ENCODE measurements at regions of chr12 and their contacts with region 1.

Region 1: DNA sequence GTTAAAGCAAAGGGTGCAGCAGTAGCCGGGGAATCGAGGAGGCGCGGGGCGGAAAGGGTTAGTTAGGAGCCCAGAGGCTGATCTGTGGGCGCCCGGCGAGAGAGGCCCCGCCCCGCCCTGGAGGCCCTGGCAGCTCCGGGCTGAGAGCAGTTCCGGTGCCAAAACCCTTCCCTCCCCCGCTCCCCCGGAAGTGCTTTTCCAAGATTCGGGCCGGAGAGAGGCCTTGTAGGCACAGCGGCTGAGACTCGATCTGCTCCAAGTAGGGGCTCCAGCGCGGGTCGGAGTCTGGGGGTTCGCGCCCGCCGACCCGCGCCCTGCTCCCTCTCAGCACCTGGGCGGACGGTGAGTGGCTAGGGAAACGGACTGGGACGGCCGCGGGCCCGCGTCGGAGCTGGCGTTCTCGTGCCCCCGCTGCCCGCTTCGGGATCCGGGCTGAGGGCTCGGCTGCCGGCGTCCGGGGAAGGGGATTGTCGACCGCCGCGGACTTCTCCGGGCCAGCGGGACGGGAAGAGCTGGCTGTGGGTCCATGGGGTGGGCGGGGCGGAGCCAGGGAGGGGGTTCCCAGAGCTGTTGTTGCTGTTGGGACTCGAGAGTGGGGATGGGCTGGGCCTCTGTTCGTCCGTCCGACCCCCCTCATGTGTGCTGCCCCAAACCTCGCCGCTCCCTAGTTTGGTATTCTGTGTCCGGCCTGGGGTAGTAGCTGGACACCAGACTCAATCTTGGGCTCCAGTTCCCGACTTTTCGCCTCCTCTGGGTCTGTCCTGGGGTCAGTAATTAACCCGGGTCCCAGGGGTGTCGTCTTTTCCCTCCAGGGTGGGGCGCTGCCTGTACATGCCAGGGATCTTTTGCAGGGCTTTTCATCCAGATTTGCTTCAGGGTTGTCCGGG is at the start of gene FRS2:
- DNase-seq: peak; percentile 88 to 93 (median 92)
- ATAC-seq: peak; percentile 98
- H3K4me3 ChIP-seq: peak within 1 kb of the TSS; percentile 99
- H3K27ac ChIP-seq: peak within 1 kb of the TSS; percentile 88
- H3K4me1 ChIP-seq: peaks cover 6 to 12% of the 10 kb centered on the region in 2 experiments; a peak in 4 of 5 replicates
- H3K27me3 ChIP-seq: no peaks in the 10 kb centered on the region
- CTCF ChIP-seq: peak; percentile 59 to 63 (median 60)
- EP300 ChIP-seq: peak; percentile 8; the same call in 1 of the 2 replicates
- POLR2A ChIP-seq: peak; percentile 91
- RAD21 ChIP-seq: peak in 1 of 2 experiments; percentile 66; a peak in 3 of 4 replicates
- polyA plus RNA-seq, gene FRS2: 1.0 to 1.5 TPM

Region 2: GRCh38 chr12:69231479-69231878 is 239.0 kb before region 1 on chr12:
- CTCF ChIA-PET with region 1: no interaction called
- POLR2A ChIA-PET with region 1: no interaction called
- in situ Hi-C with region 1: no loop called
- intact Hi-C with region 1: no loop called
- DNase-seq: no peak
- ATAC-seq: no peak
- H3K4me3 ChIP-seq: no peak overlapping the region
- H3K27ac ChIP-seq: no peak overlapping the region
- H3K4me1 ChIP-seq: no peaks in the 10 kb centered on the region
- H3K27me3 ChIP-seq: no peaks in the 10 kb centered on the region
- CTCF ChIP-seq: no peak
- EP300 ChIP-seq: no peak
- POLR2A ChIP-seq: no peak
- RAD21 ChIP-seq: no peak

Region 3: DNA sequence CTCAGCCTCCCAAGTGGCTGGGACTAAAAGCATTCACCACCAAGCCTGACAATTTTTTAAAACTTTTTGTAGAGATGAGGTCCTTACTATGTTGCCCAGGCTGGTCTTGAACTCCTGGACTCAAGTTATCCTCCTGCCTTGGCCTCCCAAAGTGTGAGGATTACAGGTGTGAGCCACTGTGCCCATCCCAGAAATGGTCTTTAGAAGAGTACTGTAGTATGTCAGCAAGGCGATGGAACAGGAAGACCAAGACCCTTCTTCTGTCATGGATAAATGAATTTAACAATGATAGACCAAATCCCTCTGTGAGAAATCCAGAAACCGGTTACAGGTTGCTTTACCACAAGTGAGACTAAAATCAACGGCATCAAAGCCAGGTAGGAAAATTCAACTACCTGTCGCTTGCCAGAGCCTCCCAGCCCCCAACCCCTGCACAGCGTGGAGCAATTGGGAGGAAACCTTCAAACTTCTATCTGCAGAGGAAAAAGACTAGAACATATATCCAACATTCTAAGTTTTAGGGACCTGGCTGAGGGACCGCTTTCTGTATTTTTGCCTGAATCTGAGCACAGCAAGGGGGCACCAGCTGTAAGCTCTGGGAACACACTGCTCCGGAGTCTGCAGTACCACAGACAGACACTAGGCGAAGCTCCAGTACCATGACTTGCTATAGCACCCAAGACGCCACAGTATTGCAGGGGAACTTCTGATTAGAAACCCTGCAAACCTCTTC is 179.7 kb before region 1 on chr12:
- CTCF ChIA-PET with region 1: no interaction called
- POLR2A ChIA-PET with region 1: no interaction called
- in situ Hi-C with region 1: no loop called
- intact Hi-C with region 1: loop called (anchors 5 kb)
- DNase-seq: peak; percentile 76 to 91 (median 78)
- ATAC-seq: peak; percentile 100
- H3K4me3 ChIP-seq: no peak overlapping the region
- H3K27ac ChIP-seq: no peak overlapping the region
- H3K4me1 ChIP-seq: no peaks in the 10 kb centered on the region; a peak in 1 of 5 replicates
- H3K27me3 ChIP-seq: no peaks in the 10 kb centered on the region
- CTCF ChIP-seq: peak; percentile 99 to 100 (median 99)
- EP300 ChIP-seq: no peak
- POLR2A ChIP-seq: no peak
- RAD21 ChIP-seq: peak; percentile 98 to 99

Region 4: GRCh38 chr12:69359531-69360347 is 110.7 kb before region 1 on chr12 and contains the start of gene YEATS4:
- CTCF ChIA-PET with region 1: no interaction called
- POLR2A ChIA-PET with region 1: no interaction called
- in situ Hi-C with region 1: no loop called
- intact Hi-C with region 1: loop called (anchors 10 kb)
- DNase-seq: peak; percentile 86 to 95 (median 90)
- ATAC-seq: peak; percentile 94
- H3K4me3 ChIP-seq: peak within 1 kb of the TSS; percentile 52
- H3K27ac ChIP-seq: peak within 1 kb of the TSS; percentile 95
- H3K4me1 ChIP-seq: peaks cover 11 to 14% of the 10 kb centered on the region in 2 experiments; a peak in 4 of 5 replicates
- H3K27me3 ChIP-seq: no peaks in the 10 kb centered on the region
- CTCF ChIP-seq: no peak
- EP300 ChIP-seq: peak; percentile 34; the same call in 1 of the 2 replicates
- POLR2A ChIP-seq: peak; percentile 95
- RAD21 ChIP-seq: no peak
- polyA plus RNA-seq, gene YEATS4: 25.9 to 26.3 TPM

Region 5: DNA sequence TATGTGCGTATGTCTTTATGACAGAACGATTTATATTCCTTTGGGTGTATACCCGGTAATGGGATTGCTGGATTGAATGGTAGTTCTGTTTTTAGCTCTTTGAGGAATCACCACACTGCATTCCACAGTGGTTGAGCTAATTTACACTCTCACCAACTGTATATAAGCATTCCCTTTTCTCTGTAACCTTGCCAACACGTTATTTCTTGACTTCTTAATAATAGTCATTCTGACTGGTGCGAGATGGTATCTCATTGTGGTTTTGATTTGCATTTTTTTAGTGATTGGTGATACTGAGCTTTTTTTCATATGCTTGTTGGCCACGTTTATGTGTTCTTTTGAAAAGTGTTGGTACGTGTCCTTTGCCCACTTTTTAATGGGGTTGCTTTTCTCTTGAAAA is 49.4 kb after region 1 on chr12:
- CTCF ChIA-PET with region 1: no interaction called
- POLR2A ChIA-PET with region 1: no interaction called
- in situ Hi-C with region 1: no loop called
- intact Hi-C with region 1: loop called (anchors 5 kb)
- DNase-seq: no peak
- ATAC-seq: no peak
- H3K4me3 ChIP-seq: no peak overlapping the region
- H3K27ac ChIP-seq: no peak overlapping the region
- H3K4me1 ChIP-seq: peaks cover 8 to 15% of the 10 kb centered on the region in 2 experiments; a peak in 3 of 5 replicates
- H3K27me3 ChIP-seq: no peaks in the 10 kb centered on the region
- CTCF ChIP-seq: no peak
- EP300 ChIP-seq: no peak
- POLR2A ChIP-seq: no peak
- RAD21 ChIP-seq: no peak

Region 6: GRCh38 chr12:69570545-69571399 is 100.3 kb after region 1 on chr12:
- CTCF ChIA-PET with region 1: interaction called, 9 read pairs
- POLR2A ChIA-PET with region 1: interaction called, 4 read pairs
- in situ Hi-C with region 1: no loop called
- intact Hi-C with region 1: loop called (anchors 1 kb)
- DNase-seq: peak; percentile 59 to 76 (median 64)
- ATAC-seq: peak; percentile 96
- H3K4me3 ChIP-seq: no peak overlapping the region
- H3K27ac ChIP-seq: no peak overlapping the region
- H3K4me1 ChIP-seq: no peaks in the 10 kb centered on the region
- H3K27me3 ChIP-seq: no peaks in the 10 kb centered on the region
- CTCF ChIP-seq: peak; percentile 77 to 87 (median 77)
- EP300 ChIP-seq: no peak
- POLR2A ChIP-seq: no peak
- RAD21 ChIP-seq: peak; percentile 84

Region 7: GRCh38 chr12:69623970-69624369 is 153.5 kb after region 1 on chr12:
- CTCF ChIA-PET with region 1: no interaction called
- POLR2A ChIA-PET with region 1: no interaction called
- in situ Hi-C with region 1: no loop called
- intact Hi-C with region 1: loop called (anchors 5 kb)
- DNase-seq: peak; percentile 71 to 99 (median 82)
- ATAC-seq: peak; percentile 96
- H3K4me3 ChIP-seq: no peak overlapping the region
- H3K27ac ChIP-seq: peak overlapping the region; percentile 52
- H3K4me1 ChIP-seq: peaks cover 16 to 18% of the 10 kb centered on the region in 2 experiments
- H3K27me3 ChIP-seq: 0 out of 5 replicates have a peak, but pooled peaks cover 0 to 6% of the 10 kb centered on the region in 2 experiments
- CTCF ChIP-seq: no peak
- EP300 ChIP-seq: peak; percentile 95
- POLR2A ChIP-seq: no peak
- RAD21 ChIP-seq: peak in 1 of 2 experiments; percentile 12; a peak in 2 of 4 replicates

Region 8: GRCh38 chr12:69639400-69640016 is 169.1 kb after region 1 on chr12:
- CTCF ChIA-PET with region 1: no interaction called
- POLR2A ChIA-PET with region 1: no interaction called
- in situ Hi-C with region 1: no loop called
- intact Hi-C with region 1: loop called (anchors 2 kb)
- DNase-seq: peak; percentile 78 to 88 (median 82)
- ATAC-seq: peak; percentile 95
- H3K4me3 ChIP-seq: no peak overlapping the region
- H3K27ac ChIP-seq: no peak overlapping the region
- H3K4me1 ChIP-seq: peaks cover 0 to 4% of the 10 kb centered on the region in 2 experiments; a peak in 3 of 5 replicates
- H3K27me3 ChIP-seq: no peaks in the 10 kb centered on the region
- CTCF ChIP-seq: peak; percentile 85 to 93 (median 88)
- EP300 ChIP-seq: no peak
- POLR2A ChIP-seq: no peak
- RAD21 ChIP-seq: peak; percentile 79 to 81